Activated naive CD4-positive, alpha-beta T cell treated with anti-CD3 and anti-CD28 coated beads for 36 hours (primary cell): ENCODE measurements at regions of chrX and their contacts with region 1.

Region 1: GRCh38 chrX:66110112-66110511 is 53.9 kb upstream of the HEPH start:
- DNase-seq: peak; percentile 8
- H3K4me3 Mint-ChIP-seq: no peak overlapping the region
- H3K27ac Mint-ChIP-seq: no peak overlapping the region
- H3K4me1 Mint-ChIP-seq: peaks cover 7% of the 10 kb centered on the region
- H3K27me3 Mint-ChIP-seq: no peaks in the 10 kb centered on the region

Region 2: DNA sequence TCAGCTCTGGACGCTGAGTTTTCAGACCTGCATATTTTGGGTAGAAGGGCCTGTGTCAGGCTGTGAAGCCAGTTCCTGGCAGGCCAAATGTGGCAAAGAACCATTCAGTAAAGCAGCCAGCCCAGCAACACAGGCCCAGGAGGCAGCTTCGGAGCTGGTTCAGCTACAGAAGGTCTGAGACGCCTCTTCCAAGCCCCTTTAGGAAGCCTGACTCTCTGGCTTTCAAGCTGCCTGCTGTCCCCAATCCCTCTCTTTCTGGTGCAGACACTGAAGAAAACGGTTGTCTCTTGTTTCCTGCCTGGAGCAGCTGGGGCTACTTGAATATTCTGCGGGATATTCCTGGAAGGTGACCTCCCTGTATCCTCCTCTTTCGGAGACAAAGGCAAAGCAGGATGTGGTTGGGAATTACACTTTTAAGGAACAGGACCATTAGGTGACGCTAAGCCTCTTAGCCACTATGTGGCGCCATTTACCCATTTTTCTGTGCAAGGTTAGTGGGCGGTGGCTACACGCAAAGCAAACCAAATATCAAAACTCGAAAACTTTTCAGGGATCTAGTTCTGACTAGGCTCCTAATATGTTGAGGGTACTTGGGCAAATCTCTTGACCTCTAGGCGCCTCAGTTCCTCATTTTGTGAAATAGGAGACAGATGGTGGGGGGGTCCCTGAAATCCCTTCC is 528.3 kb before region 1 on chrX:
- CTCF ChIA-PET with region 1: interaction called, 5 read pairs
- intact Hi-C with region 1: loop called (anchors 1 kb)
- DNase-seq: peak; percentile 69
- H3K4me3 Mint-ChIP-seq: no peak overlapping the region
- H3K27ac Mint-ChIP-seq: no peak overlapping the region
- H3K4me1 Mint-ChIP-seq: peaks cover 6% of the 10 kb centered on the region
- H3K27me3 Mint-ChIP-seq: no peaks in the 10 kb centered on the region

Region 3: GRCh38 chrX:65750674-65751469 is 359.2 kb before region 1 on chrX:
- CTCF ChIA-PET with region 1: no interaction called
- intact Hi-C with region 1: loop called (anchors 1 kb)
- DNase-seq: peak; percentile 60
- H3K4me3 Mint-ChIP-seq: peak overlapping the region; percentile 4
- H3K27ac Mint-ChIP-seq: peak overlapping the region; percentile 30
- H3K4me1 Mint-ChIP-seq: peaks cover 56% of the 10 kb centered on the region
- H3K27me3 Mint-ChIP-seq: no peaks in the 10 kb centered on the region

Region 4: GRCh38 chrX:66004928-66005829 is 104.9 kb before region 1 on chrX:
- CTCF ChIA-PET with region 1: no interaction called
- intact Hi-C with region 1: no loop called
- DNase-seq: no peak
- H3K4me3 Mint-ChIP-seq: no peak overlapping the region
- H3K27ac Mint-ChIP-seq: peak overlapping the region; percentile 61
- H3K4me1 Mint-ChIP-seq: peaks cover 57% of the 10 kb centered on the region
- H3K27me3 Mint-ChIP-seq: no peaks in the 10 kb centered on the region

Region 5: DNA sequence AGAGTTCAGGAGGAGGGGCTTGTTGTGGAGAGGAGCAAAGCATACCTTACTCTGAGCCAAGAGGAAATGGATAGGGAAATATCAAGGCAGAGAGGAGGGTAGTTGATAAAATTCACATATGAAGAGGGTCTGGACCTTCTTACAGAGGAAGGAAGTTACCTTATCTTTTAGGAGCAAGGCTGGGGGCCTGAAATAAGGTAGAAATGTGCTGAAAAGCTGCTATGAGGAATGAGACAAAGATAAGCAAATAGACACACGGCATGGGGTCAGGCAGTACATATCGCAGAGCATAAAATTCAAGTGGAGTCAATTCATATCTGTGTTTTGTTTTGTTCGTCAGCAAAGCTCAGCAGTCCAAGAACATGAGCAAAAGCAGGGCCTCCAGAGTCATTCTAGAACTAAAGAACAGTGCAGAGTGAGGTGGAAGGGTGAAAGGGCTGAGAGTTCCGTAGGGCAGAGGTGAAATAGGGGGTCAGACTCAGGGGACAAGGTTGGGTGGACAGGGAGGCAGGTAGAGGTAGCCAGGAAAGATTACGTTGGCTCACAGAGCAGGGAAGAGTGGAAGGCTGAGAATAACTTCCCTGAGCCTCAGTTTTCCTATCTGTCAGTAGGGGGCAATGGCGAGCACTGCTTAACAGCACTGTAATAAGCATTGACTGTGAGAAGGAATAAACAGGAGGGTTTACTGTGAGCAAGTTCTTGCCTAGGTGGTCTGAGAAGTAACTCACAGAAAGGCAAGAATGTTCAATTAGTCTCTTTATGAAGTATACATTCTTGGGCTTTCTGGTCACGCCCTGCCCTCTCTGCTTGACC is 79.4 kb before region 1 on chrX:
- CTCF ChIA-PET with region 1: interaction called, 5 read pairs
- intact Hi-C with region 1: loop called (anchors 1 kb)
- DNase-seq: peak; percentile 37
- H3K4me3 Mint-ChIP-seq: no peak overlapping the region
- H3K27ac Mint-ChIP-seq: no peak overlapping the region
- H3K4me1 Mint-ChIP-seq: peaks cover 5% of the 10 kb centered on the region
- H3K27me3 Mint-ChIP-seq: no peaks in the 10 kb centered on the region

Region 6: GRCh38 chrX:66200855-66201795 is 91.0 kb after region 1 on chrX:
- CTCF ChIA-PET with region 1: no interaction called
- intact Hi-C with region 1: loop called (anchors 5 kb)
- DNase-seq: no peak
- H3K4me3 Mint-ChIP-seq: no peak overlapping the region
- H3K27ac Mint-ChIP-seq: no peak overlapping the region
- H3K4me1 Mint-ChIP-seq: peaks cover 28% of the 10 kb centered on the region
- H3K27me3 Mint-ChIP-seq: no peaks in the 10 kb centered on the region

Region 7: GRCh38 chrX:66233209-66233608 is 123.1 kb after region 1 on chrX:
- CTCF ChIA-PET with region 1: no interaction called
- intact Hi-C with region 1: no loop called
- DNase-seq: no peak
- H3K4me3 Mint-ChIP-seq: no peak overlapping the region
- H3K27ac Mint-ChIP-seq: no peak overlapping the region
- H3K4me1 Mint-ChIP-seq: no peaks in the 10 kb centered on the region
- H3K27me3 Mint-ChIP-seq: no peaks in the 10 kb centered on the region